Activated CD8-positive, alpha-beta T cell treated with anti-CD3 and anti-CD28 coated beads for 36 hours (primary cell): ENCODE measurements at regions of chr9 and their contacts with region 1.

Region 1: GRCh38 chr9:15295761-15296405 is 11.1 kb downstream of the TTC39B start:
- DNase-seq: no peak
- ATAC-seq: no peak
- H3K4me3 Mint-ChIP-seq: peak overlapping the region; percentile 70
- H3K27ac Mint-ChIP-seq: peak overlapping the region; percentile 96
- H3K4me1 Mint-ChIP-seq: peaks cover 86% of the 10 kb centered on the region
- H3K27me3 Mint-ChIP-seq: no peaks in the 10 kb centered on the region
- CTCF ChIP-seq: no peak

Region 2: DNA sequence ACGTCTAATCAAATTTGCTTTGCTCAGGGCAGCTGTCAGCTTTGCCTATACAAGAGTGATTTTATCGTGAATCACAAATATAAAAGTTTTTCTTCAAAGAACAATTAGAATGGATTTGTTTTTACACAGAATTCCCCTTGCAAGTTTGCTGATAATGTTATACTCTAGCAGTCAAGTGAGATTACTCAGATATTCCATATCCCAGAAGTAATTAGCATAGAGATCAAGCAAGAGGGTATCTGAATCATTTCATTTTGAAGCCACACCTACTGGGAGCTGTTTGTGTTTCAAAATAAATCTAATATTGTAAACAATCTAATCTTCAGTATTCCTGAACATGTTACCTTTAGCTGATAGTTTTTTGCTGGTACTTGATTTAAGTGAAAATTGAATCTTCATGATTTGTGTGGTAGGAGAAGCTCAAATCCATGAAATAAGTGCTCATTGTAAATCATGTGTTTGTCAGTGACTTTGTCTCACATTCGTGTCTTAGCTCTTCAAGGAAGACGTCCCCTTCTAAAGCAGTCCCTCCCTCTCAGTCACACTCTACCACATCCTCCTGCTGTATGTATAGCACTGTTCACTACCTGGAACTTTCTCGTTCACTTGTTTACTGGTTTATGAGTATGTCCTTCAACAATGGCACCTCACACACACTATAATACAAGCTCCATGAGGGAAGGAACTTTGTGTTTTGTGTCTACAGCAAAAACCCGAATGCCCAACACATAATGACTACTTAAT is 14.4 kb after region 1 on chr9:
- CTCF ChIA-PET with region 1: interaction called, 13 read pairs
- POLR2A ChIA-PET with region 1: interaction called, 14 read pairs
- intact Hi-C with region 1: no loop called
- DNase-seq: peak; percentile 30
- ATAC-seq: peak; percentile 69
- H3K4me3 Mint-ChIP-seq: peak overlapping the region; percentile 33
- H3K27ac Mint-ChIP-seq: peak overlapping the region; percentile 88
- H3K4me1 Mint-ChIP-seq: peaks cover 34% of the 10 kb centered on the region
- H3K27me3 Mint-ChIP-seq: no peaks in the 10 kb centered on the region
- CTCF ChIP-seq: no peak

Region 3: DNA sequence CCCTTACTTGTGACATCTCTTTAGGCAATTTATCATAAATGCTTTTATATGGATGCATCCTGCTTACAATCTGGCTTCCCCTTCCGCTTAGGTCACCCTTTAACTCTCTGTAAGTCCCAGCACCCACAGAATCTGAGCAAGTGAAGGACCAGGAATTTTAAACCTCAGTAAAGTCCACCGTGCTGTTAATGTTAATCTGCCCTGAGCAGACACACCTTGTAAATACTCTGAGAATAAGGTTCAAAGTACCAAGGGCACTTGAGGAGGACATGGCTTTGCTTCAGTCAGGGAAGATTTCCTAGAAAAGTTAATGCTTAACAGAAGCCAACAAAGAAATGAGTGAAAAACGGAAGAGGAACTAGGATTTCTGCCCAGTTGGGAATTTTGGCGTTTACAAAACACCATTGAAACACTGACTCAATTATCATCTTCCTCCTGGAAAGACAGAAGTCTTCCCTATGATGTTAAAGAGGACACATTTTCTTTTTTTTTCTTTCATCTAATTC is 37.5 kb after region 1 on chr9:
- CTCF ChIA-PET with region 1: no interaction called
- POLR2A ChIA-PET with region 1: no interaction called
- intact Hi-C with region 1: no loop called
- DNase-seq: no peak
- ATAC-seq: no peak
- H3K4me3 Mint-ChIP-seq: no peak overlapping the region
- H3K27ac Mint-ChIP-seq: no peak overlapping the region
- H3K4me1 Mint-ChIP-seq: no peaks in the 10 kb centered on the region
- H3K27me3 Mint-ChIP-seq: no peaks in the 10 kb centered on the region
- CTCF ChIP-seq: no peak

Region 4: GRCh38 chr9:15422372-15423230 is 126.7 kb after region 1 on chr9 and contains the start of gene SNAPC3:
- CTCF ChIA-PET with region 1: interaction called, 3 read pairs
- POLR2A ChIA-PET with region 1: interaction called, 4 read pairs
- intact Hi-C with region 1: loop called (anchors 5 kb)
- DNase-seq: peak; percentile 94
- ATAC-seq: peak; percentile 97
- H3K4me3 Mint-ChIP-seq: peak within 1 kb of the TSS; percentile 95
- H3K27ac Mint-ChIP-seq: peak within 1 kb of the TSS; percentile 89
- H3K4me1 Mint-ChIP-seq: peaks cover 26% of the 10 kb centered on the region
- H3K27me3 Mint-ChIP-seq: no peaks in the 10 kb centered on the region
- CTCF ChIP-seq: no peak
- total RNA-seq, gene SNAPC3: 30.3 to 32.1 TPM

Region 5: GRCh38 chr9:15433661-15434060 is 137.8 kb after region 1 on chr9:
- CTCF ChIA-PET with region 1: no interaction called
- POLR2A ChIA-PET with region 1: no interaction called
- intact Hi-C with region 1: no loop called
- DNase-seq: no peak
- ATAC-seq: no peak
- H3K4me3 Mint-ChIP-seq: no peak overlapping the region
- H3K27ac Mint-ChIP-seq: no peak overlapping the region
- H3K4me1 Mint-ChIP-seq: peaks cover 46% of the 10 kb centered on the region
- H3K27me3 Mint-ChIP-seq: no peaks in the 10 kb centered on the region
- CTCF ChIP-seq: no peak